Heart right ventricle (tissue), 16 donors: ENCODE measurements at regions of chr10 and their contacts with region 1.

Region 1: GRCh38 chr10:34655286-34656170 is 159.6 kb downstream of the PARD3 start:
- DNase-seq: peak in 1 of 2 donors; percentile 38
- ATAC-seq: peak in 1 of 8 donors; percentile 17
- H3K4me3 ChIP-seq: no peak overlapping the region
- H3K27ac ChIP-seq: no peak overlapping the region
- H3K4me1 ChIP-seq: peaks cover 0 to 28% (median 14%) of the 10 kb centered on the region in 9 donors
- H3K27me3 ChIP-seq: no peaks in the 10 kb centered on the region
- CTCF ChIP-seq: peak; percentile 46 to 79 (median 72)

Region 2: GRCh38 chr10:34565934-34566333 is 89.6 kb before region 1 on chr10:
- intact Hi-C with region 1: no loop called
- DNase-seq: no peak
- ATAC-seq: no peak
- H3K4me3 ChIP-seq: no peak overlapping the region
- H3K27ac ChIP-seq: no peak overlapping the region
- H3K4me1 ChIP-seq: peaks cover 4 to 18% (median 11%) of the 10 kb centered on the region in 9 donors
- H3K27me3 ChIP-seq: no peaks in the 10 kb centered on the region
- CTCF ChIP-seq: no peak

Region 3: DNA sequence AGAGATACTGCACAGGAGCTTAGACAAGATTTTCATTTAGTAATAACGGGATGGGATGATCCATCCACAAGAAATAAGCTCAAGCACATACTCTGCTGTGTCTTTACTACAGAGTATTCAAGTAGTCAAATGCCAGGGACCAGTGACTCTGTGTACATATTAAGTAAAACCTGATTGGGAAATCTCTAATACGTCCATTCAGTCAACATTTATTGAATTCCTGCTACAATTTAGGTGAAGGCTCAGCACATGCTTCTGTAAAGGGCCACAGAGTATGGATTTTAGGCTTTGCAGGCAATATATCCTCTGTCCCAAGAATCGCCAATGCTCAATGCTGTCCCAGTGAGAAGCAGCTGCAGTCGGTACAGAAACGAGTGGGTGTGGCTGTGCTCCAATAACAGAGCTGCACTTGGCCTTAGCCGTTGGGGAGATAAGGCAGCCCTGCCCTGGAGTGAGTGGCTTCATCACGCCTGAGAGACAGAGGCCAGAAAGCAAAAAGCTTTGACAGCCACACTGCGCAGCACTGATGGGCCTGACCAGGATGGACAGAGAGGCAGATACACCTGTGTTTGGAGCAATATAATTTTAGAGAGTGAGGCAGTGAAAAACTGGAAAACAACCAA is 27.2 kb before region 1 on chr10:
- intact Hi-C with region 1: no loop called
- DNase-seq: peak; percentile 68 to 83
- ATAC-seq: peak; percentile 91 to 97 (median 94)
- H3K4me3 ChIP-seq: peak overlapping the region in 1 of 10 donors; percentile 16
- H3K27ac ChIP-seq: peak overlapping the region in 1 of 10 donors; percentile 26
- H3K4me1 ChIP-seq: peaks cover 0 to 30% (median 13%) of the 10 kb centered on the region in 9 donors
- H3K27me3 ChIP-seq: no peaks in the 10 kb centered on the region
- CTCF ChIP-seq: no peak

Region 4: DNA sequence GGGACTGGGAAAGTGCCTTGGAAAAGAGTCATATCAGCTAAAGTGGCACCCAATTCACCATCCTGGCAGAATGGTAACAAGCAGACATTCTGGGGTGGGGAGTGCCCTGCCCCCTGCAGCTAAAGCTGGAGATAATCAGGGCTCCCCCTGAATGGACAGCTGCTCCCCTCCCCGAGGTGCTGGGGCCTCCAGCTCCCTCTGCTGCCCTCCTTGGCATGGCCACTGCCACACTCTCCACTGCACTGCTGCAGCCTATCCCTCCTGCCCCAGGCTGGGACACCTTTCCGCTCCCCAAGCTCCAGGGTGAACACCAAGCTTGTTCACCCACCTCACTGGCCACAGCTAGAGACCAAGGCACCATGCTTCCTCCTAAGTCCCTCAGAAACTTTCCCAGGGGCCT is 169.3 kb after region 1 on chr10:
- intact Hi-C with region 1: loop called in 1 of 10 experiments (anchors 10 kb)
- DNase-seq: no peak
- ATAC-seq: peak in 6 of 8 donors; percentile 47 to 73 (median 63)
- H3K4me3 ChIP-seq: no peak overlapping the region
- H3K27ac ChIP-seq: no peak overlapping the region
- H3K4me1 ChIP-seq: no peaks in the 10 kb centered on the region
- H3K27me3 ChIP-seq: peaks cover 0 to 4% (median 0%) of the 10 kb centered on the region in 7 donors
- CTCF ChIP-seq: peak in 5 of 9 donors; percentile 21 to 43 (median 31)

Region 5: GRCh38 chr10:34960983-34961382 is 305.5 kb after region 1 on chr10:
- intact Hi-C with region 1: loop called in 8 of 10 experiments (anchors 5 to 10 kb)
- DNase-seq: peak; percentile 22 to 48
- ATAC-seq: peak; percentile 78 to 95 (median 90)
- H3K4me3 ChIP-seq: no peak overlapping the region
- H3K27ac ChIP-seq: no peak overlapping the region
- H3K4me1 ChIP-seq: no peaks in the 10 kb centered on the region
- H3K27me3 ChIP-seq: no peaks in the 10 kb centered on the region
- CTCF ChIP-seq: peak in 8 of 9 donors; percentile 12 to 59 (median 45)